MCF 10A (cell line): ENCODE measurements at regions of chr14 and their contacts with region 1.

Region 1: GRCh38 chr14:56491299-56492285 is 88.0 kb upstream of the TMEM260 start:
- DNase-seq: peak; percentile 49
- H3K4me3 Mint-ChIP-seq: no peak overlapping the region
- H3K27ac Mint-ChIP-seq: no peak overlapping the region
- H3K4me1 Mint-ChIP-seq: peaks cover 13% of the 10 kb centered on the region
- H3K27me3 Mint-ChIP-seq: peaks cover 27% of the 10 kb centered on the region
- CTCF ChIP-seq: peak; percentile 51

Region 2: GRCh38 chr14:55438066-55438683 is 1053.4 kb before region 1 on chr14:
- CTCF ChIA-PET with region 1: interaction called, 10 read pairs
- POLR2A ChIA-PET with region 1: no interaction called
- intact Hi-C with region 1: no loop called
- DNase-seq: peak; percentile 68
- H3K4me3 Mint-ChIP-seq: no peak overlapping the region
- H3K27ac Mint-ChIP-seq: no peak overlapping the region
- H3K4me1 Mint-ChIP-seq: no peaks in the 10 kb centered on the region
- H3K27me3 Mint-ChIP-seq: peaks cover 16% of the 10 kb centered on the region
- CTCF ChIP-seq: peak; percentile 63

Region 3: GRCh38 chr14:56379956-56380355 is 111.6 kb before region 1 on chr14:
- CTCF ChIA-PET with region 1: no interaction called
- POLR2A ChIA-PET with region 1: no interaction called
- intact Hi-C with region 1: no loop called
- DNase-seq: peak; percentile 40
- H3K4me3 Mint-ChIP-seq: no peak overlapping the region
- H3K27ac Mint-ChIP-seq: peak overlapping the region; percentile 92
- H3K4me1 Mint-ChIP-seq: peaks cover 31% of the 10 kb centered on the region
- H3K27me3 Mint-ChIP-seq: no peaks in the 10 kb centered on the region
- CTCF ChIP-seq: no peak

Region 4: GRCh38 chr14:56555921-56556570 is 64.5 kb after region 1 on chr14:
- CTCF ChIA-PET with region 1: interaction called, 26 read pairs
- POLR2A ChIA-PET with region 1: no interaction called
- intact Hi-C with region 1: loop called (anchors 5 kb)
- DNase-seq: peak; percentile 50
- H3K4me3 Mint-ChIP-seq: no peak overlapping the region
- H3K27ac Mint-ChIP-seq: no peak overlapping the region
- H3K4me1 Mint-ChIP-seq: no peaks in the 10 kb centered on the region
- H3K27me3 Mint-ChIP-seq: no peaks in the 10 kb centered on the region
- CTCF ChIP-seq: peak; percentile 72

Region 5: GRCh38 chr14:56659964-56660551 is 168.5 kb after region 1 on chr14:
- CTCF ChIA-PET with region 1: interaction called, 10 read pairs
- POLR2A ChIA-PET with region 1: no interaction called
- intact Hi-C with region 1: loop called (anchors 5 kb)
- DNase-seq: peak; percentile 51
- H3K4me3 Mint-ChIP-seq: no peak overlapping the region
- H3K27ac Mint-ChIP-seq: no peak overlapping the region
- H3K4me1 Mint-ChIP-seq: no peaks in the 10 kb centered on the region
- H3K27me3 Mint-ChIP-seq: no peaks in the 10 kb centered on the region
- CTCF ChIP-seq: peak; percentile 55

Region 6: GRCh38 chr14:57182760-57183503 is 691.3 kb after region 1 on chr14:
- CTCF ChIA-PET with region 1: interaction called, 23 read pairs
- POLR2A ChIA-PET with region 1: no interaction called
- intact Hi-C with region 1: loop called (anchors 2 kb)
- DNase-seq: peak; percentile 45
- H3K4me3 Mint-ChIP-seq: no peak overlapping the region
- H3K27ac Mint-ChIP-seq: no peak overlapping the region
- H3K4me1 Mint-ChIP-seq: no peaks in the 10 kb centered on the region
- H3K27me3 Mint-ChIP-seq: peaks cover 66% of the 10 kb centered on the region
- CTCF ChIP-seq: peak; percentile 44

Region 7: DNA sequence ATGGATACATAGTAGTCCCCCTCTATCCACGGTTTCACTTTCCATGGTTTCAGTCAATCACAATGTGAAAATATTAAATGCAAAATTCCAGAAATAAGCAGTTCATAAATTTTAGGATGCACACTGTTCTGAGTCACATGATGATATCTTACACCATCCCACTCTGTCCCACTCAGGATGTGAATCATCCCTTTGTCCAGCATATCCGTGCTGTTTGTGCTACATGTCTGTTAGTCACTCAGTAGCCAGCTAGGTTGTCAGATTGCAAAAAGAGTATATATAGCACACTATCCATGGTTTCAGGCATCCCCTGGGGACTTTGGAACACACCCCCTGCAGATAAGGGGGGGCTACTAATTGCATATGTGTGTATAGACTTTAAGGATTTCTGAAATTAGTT is 890.7 kb after region 1 on chr14:
- CTCF ChIA-PET with region 1: interaction called, 8 read pairs
- POLR2A ChIA-PET with region 1: no interaction called
- intact Hi-C with region 1: loop called (anchors 2 kb)
- DNase-seq: peak; percentile 82
- H3K4me3 Mint-ChIP-seq: no peak overlapping the region
- H3K27ac Mint-ChIP-seq: no peak overlapping the region
- H3K4me1 Mint-ChIP-seq: peaks cover 17% of the 10 kb centered on the region
- H3K27me3 Mint-ChIP-seq: no peaks in the 10 kb centered on the region
- CTCF ChIP-seq: no peak